IMR-90 (cell line): ENCODE measurements at regions of chr11 and their contacts with region 1.

Region 1: GRCh38 chr11:57530596-57531507 is at the start of gene TIMM10:
- DNase-seq: peak; percentile 95
- ATAC-seq: peak; percentile 98
- H3K4me3 ChIP-seq: peak within 1 kb of the TSS; percentile 80
- H3K27ac ChIP-seq: peak within 1 kb of the TSS; percentile 78
- H3K4me1 ChIP-seq: peaks cover 5% of the 10 kb centered on the region; the same call in 1 of the 2 replicates
- H3K27me3 ChIP-seq: peaks cover 3% of the 10 kb centered on the region
- CTCF ChIP-seq: no peak
- POLR2A ChIP-seq: peak; percentile 22; the same call in 1 of the 2 replicates
- RAD21 ChIP-seq: no peak
- total RNA-seq, gene TIMM10: 70.0 and 96.8 TPM in 2 replicates

Region 2: GRCh38 chr11:56855217-56855616 is 675.6 kb before region 1 on chr11:
- CTCF ChIA-PET with region 1: no interaction called
- POLR2A ChIA-PET with region 1: no interaction called
- dilution Hi-C with region 1: no loop called
- in situ Hi-C with region 1: no loop called
- intact Hi-C with region 1: no loop called
- DNase-seq: no peak
- ATAC-seq: no peak
- H3K4me3 ChIP-seq: no peak overlapping the region
- H3K27ac ChIP-seq: no peak overlapping the region
- H3K4me1 ChIP-seq: no peaks in the 10 kb centered on the region
- H3K27me3 ChIP-seq: no peaks in the 10 kb centered on the region
- CTCF ChIP-seq: no peak
- POLR2A ChIP-seq: no peak
- RAD21 ChIP-seq: no peak

Region 3: DNA sequence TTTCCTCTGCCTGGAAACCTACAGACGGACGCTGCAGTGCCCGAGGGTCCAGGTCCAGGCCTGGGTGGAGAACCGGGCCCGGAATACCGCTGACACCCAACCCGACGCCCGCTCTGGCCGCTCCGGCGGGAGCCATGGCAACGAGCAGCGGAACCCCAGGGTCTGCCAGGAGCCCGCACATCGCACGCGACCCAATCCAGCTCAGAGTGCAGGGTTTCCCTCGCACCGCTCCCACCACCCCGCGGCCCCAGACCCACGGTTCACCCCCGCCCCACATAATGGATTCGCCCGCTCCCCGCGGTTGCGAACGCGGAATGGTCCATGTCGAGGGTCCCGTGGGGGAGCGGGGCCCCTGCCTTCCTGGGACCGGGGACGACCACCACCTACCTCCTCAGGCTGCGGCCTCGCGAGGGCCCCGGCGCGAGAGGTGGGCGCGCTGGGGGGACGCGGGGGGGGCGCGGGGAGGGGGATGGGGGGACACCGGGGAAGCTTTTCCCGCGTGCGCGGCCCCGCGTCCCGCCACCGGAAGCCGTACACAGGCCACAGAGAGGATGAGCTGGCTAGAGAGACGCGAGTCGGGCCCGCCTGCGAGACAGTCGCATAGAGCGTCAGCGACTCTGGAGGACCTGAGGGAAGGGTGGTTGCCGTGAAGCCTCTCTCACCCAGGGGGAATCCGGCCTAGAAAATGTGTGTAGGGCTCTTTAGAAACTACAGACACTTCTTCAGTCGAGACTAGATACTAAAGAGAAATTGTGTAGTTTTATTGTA is 195.3 kb before region 1 on chr11 and contains the start of gene SSRP1:
- CTCF ChIA-PET with region 1: interaction called, 3 read pairs
- POLR2A ChIA-PET with region 1: interaction called, 3 read pairs
- dilution Hi-C with region 1: no loop called
- in situ Hi-C with region 1: loop called (anchors 5 kb)
- intact Hi-C with region 1: no loop called
- DNase-seq: peak; percentile 83
- ATAC-seq: peak; percentile 98
- H3K4me3 ChIP-seq: peak within 1 kb of the TSS; percentile 76
- H3K27ac ChIP-seq: peak within 1 kb of the TSS; percentile 77
- H3K4me1 ChIP-seq: peaks cover 8% of the 10 kb centered on the region
- H3K27me3 ChIP-seq: peaks cover 20% of the 10 kb centered on the region
- CTCF ChIP-seq: no peak
- POLR2A ChIP-seq: peak; percentile 66; the same call in 1 of the 2 replicates
- RAD21 ChIP-seq: no peak
- total RNA-seq, gene SSRP1: 144 and 146 TPM in 2 replicates

Region 4: DNA sequence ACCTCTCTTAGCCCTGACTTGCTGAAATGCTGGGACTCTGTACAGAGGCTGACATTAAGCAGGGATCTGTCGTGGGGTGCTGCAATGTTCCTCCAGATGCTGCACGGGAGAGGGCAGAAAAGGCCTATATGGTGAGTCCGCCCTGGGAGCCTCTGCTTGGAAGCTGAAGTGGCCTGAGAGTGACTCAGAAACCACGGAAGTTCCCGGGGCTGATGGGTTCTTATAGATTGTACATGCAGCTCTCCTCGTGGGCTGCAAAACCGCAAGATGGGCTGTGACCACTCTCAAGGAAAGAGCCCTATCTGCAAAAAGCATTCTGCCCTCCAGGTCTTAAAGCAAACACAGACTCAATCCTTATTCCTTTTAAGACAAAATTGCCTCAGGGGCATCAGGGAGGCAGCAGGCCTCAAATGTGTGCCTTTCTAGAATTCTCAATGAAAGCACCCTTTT is 98.1 kb before region 1 on chr11:
- CTCF ChIA-PET with region 1: no interaction called
- POLR2A ChIA-PET with region 1: no interaction called
- dilution Hi-C with region 1: no loop called
- in situ Hi-C with region 1: no loop called
- intact Hi-C with region 1: no loop called
- DNase-seq: peak; percentile 93
- ATAC-seq: peak; percentile 75
- H3K4me3 ChIP-seq: no peak overlapping the region
- H3K27ac ChIP-seq: peak overlapping the region; percentile 24
- H3K4me1 ChIP-seq: peaks cover 24% of the 10 kb centered on the region
- H3K27me3 ChIP-seq: no peaks in the 10 kb centered on the region
- CTCF ChIP-seq: 0 out of 2 replicates have a peak, but pooled peaks have one; percentile 3
- POLR2A ChIP-seq: no peak
- RAD21 ChIP-seq: peak; percentile 28; the same call in 1 of the 2 replicates

Region 5: GRCh38 chr11:57456960-57457642 is 73.8 kb before region 1 on chr11:
- CTCF ChIA-PET with region 1: interaction called, 22 read pairs
- POLR2A ChIA-PET with region 1: interaction called, 3 read pairs
- dilution Hi-C with region 1: no loop called
- in situ Hi-C with region 1: loop called (anchors 5 kb)
- intact Hi-C with region 1: loop called (anchors 1 kb)
- DNase-seq: peak; percentile 77
- ATAC-seq: peak; percentile 89
- H3K4me3 ChIP-seq: no peak overlapping the region
- H3K27ac ChIP-seq: no peak overlapping the region
- H3K4me1 ChIP-seq: peaks cover 3% of the 10 kb centered on the region; the same call in 1 of the 2 replicates
- H3K27me3 ChIP-seq: peaks cover 51% of the 10 kb centered on the region
- CTCF ChIP-seq: peak; percentile 97
- POLR2A ChIP-seq: no peak
- RAD21 ChIP-seq: peak; percentile 92

Region 6: GRCh38 chr11:57493507-57494503 is 37.0 kb before region 1 on chr11:
- CTCF ChIA-PET with region 1: interaction called, 21 read pairs
- POLR2A ChIA-PET with region 1: no interaction called
- dilution Hi-C with region 1: no loop called
- in situ Hi-C with region 1: no loop called
- intact Hi-C with region 1: loop called (anchors 1 kb)
- DNase-seq: peak; percentile 17
- ATAC-seq: peak; percentile 61
- H3K4me3 ChIP-seq: no peak overlapping the region
- H3K27ac ChIP-seq: no peak overlapping the region
- H3K4me1 ChIP-seq: no peaks in the 10 kb centered on the region
- H3K27me3 ChIP-seq: no peaks in the 10 kb centered on the region
- CTCF ChIP-seq: peak; percentile 58
- POLR2A ChIP-seq: no peak
- RAD21 ChIP-seq: peak; percentile 46

Region 7: DNA sequence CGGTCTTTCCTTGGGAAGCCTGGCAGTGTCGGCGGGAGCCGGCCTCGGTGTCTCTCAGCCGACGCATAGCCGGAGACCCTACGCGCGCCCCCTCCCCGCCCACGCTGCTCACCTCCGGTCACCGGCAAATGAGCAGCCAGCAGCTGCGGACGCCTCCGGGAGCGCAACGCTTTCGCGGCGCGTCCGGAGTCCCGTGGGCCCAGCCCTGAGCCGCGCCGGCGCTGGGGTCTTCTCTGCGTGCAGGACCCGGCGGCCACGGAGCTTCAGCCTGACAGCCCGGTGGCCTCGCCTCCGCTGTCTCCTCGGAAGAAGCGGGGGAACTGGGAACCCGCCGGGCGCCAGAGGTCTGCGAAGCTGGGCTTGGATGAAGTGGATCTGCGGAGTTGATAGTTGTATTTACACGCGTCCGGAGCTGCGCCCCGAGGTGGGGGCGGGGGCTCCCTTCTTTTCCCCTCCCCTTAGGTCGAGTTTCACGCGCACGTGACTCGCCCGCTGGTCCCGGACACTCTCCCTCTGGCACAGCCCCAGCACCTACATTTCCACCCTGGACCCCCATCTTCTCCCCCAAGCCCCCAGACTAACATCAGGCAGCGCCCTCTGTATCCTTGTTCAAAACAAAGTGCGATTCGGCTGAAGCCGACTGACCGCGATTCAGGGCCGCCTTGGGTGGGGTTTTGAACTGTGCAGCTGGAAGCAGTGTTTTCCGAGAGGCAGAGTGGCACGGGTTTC is 15.4 kb before region 1 on chr11 and contains the start of gene SLC43A1:
- CTCF ChIA-PET with region 1: interaction called, 15 read pairs
- POLR2A ChIA-PET with region 1: no interaction called
- dilution Hi-C with region 1: no loop called
- in situ Hi-C with region 1: no loop called
- intact Hi-C with region 1: no loop called
- DNase-seq: peak; percentile 59
- ATAC-seq: peak; percentile 85
- H3K4me3 ChIP-seq: peak within 1 kb of the TSS; percentile 95
- H3K27ac ChIP-seq: peak within 1 kb of the TSS; percentile 86
- H3K4me1 ChIP-seq: no peaks in the 10 kb centered on the region; the same call in 1 of the 2 replicates
- H3K27me3 ChIP-seq: no peaks in the 10 kb centered on the region
- CTCF ChIP-seq: no peak
- POLR2A ChIP-seq: no peak
- RAD21 ChIP-seq: no peak
- total RNA-seq, gene SLC43A1: 8.6 and 10.0 TPM in 2 replicates

Region 8: GRCh38 chr11:57644748-57645688 is 114.2 kb after region 1 on chr11:
- CTCF ChIA-PET with region 1: interaction called, 3 read pairs
- POLR2A ChIA-PET with region 1: interaction called, 4 read pairs
- dilution Hi-C with region 1: no loop called
- in situ Hi-C with region 1: no loop called
- intact Hi-C with region 1: loop called (anchors 1 kb)
- DNase-seq: peak; percentile 67
- ATAC-seq: peak; percentile 28; the same call in 1 of the 2 replicates
- H3K4me3 ChIP-seq: no peak overlapping the region
- H3K27ac ChIP-seq: no peak overlapping the region
- H3K4me1 ChIP-seq: peaks cover 34% of the 10 kb centered on the region
- H3K27me3 ChIP-seq: no peaks in the 10 kb centered on the region
- CTCF ChIP-seq: peak; percentile 73
- POLR2A ChIP-seq: no peak
- RAD21 ChIP-seq: peak; percentile 64